ENCODE measurements at regions of chr2 and their contacts with region 1.

Region 1: DNA sequence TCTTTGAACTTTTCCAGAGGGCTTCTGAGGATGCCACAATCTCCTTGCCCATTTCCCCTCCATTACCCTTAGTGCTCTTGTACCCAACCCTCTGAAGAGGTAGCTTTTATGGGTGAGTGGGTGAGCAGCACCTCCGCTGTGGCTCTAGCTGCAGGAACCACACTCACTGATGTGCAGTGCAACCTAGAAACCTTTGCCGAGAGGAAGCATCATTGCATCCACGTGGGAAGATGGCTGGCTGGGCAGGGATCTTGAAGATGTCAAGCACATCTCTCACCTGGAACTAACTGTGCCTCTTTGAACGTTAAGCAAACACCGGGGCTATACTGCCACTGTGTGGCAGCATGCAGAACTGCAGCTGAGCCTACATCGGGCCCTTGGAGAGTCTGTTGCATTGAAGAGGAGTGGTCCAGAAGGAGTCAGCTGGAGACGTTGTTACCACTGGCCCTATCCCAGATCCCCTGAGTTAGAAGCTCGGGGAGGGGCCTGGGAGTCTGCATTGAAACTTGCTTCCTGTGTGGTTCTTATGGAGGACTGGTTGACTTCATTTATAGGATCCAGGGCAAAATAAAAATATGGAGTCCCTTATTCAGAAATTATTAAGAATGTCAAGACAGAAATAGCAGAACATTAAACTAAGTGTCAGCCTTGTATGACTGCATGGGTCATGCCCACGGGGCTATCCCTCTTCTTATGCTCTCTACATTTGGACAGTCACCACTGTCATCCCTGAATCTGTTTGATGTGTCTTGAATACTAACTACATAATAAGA is 28.7 kb downstream of the IGFBP5 start:
- DNase-seq: peak; percentile 68 to 72
- ATAC-seq: peak; percentile 75 to 91
- H3K4me3 ChIP-seq: no peak overlapping the region
- H3K27ac ChIP-seq: no peak overlapping the region
- H3K4me1 ChIP-seq: no peaks in the 10 kb centered on the region
- CTCF ChIP-seq: peak; percentile 94
- EP300 ChIP-seq: no peak
- POLR2A ChIP-seq: no peak
- RAD21 ChIP-seq: peak; percentile 97 to 98

Region 2: GRCh38 chr2:216519154-216519762 is 147.4 kb before region 1 on chr2:
- CTCF ChIA-PET with region 1: interaction called, 402 read pairs
- POLR2A ChIA-PET with region 1: interaction called, 3 read pairs
- DNase-seq: peak; percentile 52 to 73
- ATAC-seq: peak; percentile 72 to 93; a peak in 5 of 6 replicates
- H3K4me3 ChIP-seq: no peak overlapping the region
- H3K27ac ChIP-seq: no peak overlapping the region
- H3K4me1 ChIP-seq: no peaks in the 10 kb centered on the region
- CTCF ChIP-seq: peak; percentile 82
- EP300 ChIP-seq: no peak
- POLR2A ChIP-seq: no peak
- RAD21 ChIP-seq: peak; percentile 73 to 74

Region 3: DNA sequence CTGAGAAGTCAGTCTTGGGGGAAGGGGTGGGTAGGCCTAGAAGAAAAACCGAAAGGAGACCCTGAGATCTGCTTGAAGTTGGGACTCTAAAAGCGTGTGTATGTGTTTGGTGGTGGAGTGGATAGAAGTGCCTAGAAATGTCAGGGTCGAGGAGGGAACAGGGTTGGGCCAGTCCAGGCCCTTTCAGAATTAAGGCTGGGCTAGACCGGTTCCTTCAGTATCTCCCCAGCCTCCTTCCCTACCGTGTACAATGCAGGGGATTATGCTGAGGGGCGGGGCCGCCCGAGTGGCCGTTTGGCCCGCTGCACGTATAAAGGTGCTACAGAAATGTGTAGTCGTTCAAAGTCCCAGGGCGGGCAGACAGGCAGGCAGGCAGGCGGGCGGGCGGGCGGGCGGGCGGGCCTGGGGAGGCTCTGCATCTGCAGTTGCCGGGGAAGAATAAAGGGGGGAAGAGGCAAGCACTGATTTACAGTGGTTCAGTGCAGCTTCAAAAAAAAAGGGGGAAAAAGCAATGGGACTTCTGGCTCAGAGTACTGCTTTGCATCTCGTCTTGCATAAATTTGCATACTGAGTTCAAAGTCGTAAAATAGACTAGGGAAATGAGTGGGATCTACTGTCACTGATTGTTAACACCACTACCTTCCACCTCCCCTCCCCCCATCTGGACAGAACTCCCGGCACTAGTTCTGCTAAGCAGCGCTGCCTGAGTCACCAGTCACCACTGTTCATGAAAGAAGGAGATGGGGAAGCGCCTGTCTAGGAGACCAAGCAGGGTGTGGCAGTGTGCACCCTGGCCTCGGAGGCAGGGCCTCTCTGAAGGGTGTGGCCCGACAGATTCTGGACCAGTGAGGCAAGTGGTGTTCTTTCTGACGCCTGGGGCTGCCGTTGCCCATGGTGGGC is 29.8 kb before region 1 on chr2:
- CTCF ChIA-PET with region 1: interaction called, 10 read pairs
- POLR2A ChIA-PET with region 1: no interaction called
- DNase-seq: peak; percentile 67 to 84
- ATAC-seq: peak; percentile 76 to 83
- H3K4me3 ChIP-seq: no peak overlapping the region
- H3K27ac ChIP-seq: peak overlapping the region; percentile 70 to 80
- H3K4me1 ChIP-seq: peaks cover 44% of the 10 kb centered on the region
- CTCF ChIP-seq: no peak
- EP300 ChIP-seq: no peak
- POLR2A ChIP-seq: no peak
- RAD21 ChIP-seq: no peak

Region 4: DNA sequence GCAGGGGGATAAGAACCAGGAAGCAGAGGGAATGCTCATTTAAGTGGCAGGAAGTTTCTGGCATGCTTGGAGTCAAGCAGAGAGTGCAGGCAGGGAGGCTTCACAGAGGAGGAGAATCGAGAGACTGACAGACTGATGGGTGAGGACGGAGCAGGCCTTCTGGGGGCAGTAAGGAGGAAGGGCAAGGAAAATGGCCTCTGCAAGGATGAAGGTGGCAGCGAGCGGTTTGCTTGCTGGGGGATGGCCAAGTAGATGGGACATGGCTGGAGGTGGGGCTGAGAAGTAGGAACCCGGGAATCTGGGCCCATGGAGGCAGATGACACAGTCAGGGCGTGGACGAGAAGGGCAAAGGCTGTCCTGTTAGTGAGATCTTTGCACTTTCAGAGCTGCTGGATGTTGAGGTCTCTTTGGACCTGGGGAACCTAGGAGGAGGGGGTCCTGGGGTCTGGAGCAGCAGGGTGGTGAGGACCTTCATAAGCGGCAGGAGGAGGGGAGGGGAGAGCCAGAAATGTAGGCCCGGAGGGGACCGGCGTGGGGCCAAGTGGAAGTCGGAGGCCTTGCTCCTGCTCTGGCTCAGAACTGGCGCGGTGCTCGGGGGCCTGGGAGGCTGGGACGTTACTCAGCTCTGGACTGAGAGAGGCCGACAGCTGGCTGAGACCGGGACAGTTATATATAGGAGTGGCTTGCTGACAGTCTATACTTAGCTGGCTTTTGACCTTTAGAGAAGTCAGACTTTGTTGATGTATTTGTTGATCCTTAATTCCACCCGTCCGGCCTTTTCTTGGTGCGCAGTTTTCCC is 12.8 kb after region 1 on chr2:
- CTCF ChIA-PET with region 1: interaction called, 29 read pairs
- POLR2A ChIA-PET with region 1: interaction called, 3 read pairs
- DNase-seq: no peak
- ATAC-seq: no peak
- H3K4me3 ChIP-seq: no peak overlapping the region
- H3K27ac ChIP-seq: no peak overlapping the region
- H3K4me1 ChIP-seq: peaks cover 19% of the 10 kb centered on the region; the same call in 2 of the 3 replicates
- CTCF ChIP-seq: no peak
- EP300 ChIP-seq: no peak
- POLR2A ChIP-seq: no peak
- RAD21 ChIP-seq: no peak